Sciatic nerve (tissue), 2 donors: ENCODE measurements at regions of chr1 and their contacts with region 1.

Region 1: GRCh38 chr1:156689035-156689952 is 12.1 kb upstream of the NES start:
- DNase-seq: peak; percentile 89
- ATAC-seq: peak; percentile 95

Region 2: DNA sequence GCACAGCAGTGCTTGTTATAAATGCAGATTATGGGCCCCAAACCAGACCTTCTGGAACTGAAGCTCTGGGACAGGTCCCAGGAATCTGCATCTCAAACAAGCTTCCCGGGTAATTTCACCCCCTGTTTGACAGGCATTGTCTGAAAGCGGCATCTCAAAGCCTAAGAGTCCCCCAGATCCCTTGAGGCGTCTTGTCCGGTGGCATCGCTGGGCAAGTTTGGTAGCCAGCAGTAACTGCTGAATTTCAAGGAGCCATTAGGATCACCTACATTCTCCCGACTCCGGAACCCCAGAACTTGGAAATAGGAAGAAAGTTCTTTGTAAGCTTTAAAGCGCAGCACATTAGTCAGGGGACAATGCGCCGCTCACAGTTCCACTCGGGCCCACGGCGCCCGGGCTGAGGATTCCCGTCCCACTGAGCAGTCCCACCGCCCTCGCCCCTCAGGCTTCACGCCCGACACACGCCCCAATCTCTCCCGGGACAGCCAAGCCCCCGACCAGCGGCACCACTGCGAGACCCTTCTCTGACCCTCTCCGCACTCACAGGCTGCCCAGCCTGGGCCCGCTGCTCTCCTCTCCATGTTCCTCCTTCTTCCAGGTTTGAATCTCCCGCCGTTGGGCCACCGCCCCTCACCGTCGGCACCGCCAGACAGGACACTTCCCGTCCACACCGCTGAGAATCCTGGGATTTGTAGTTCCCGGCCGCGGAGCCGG is 117.2 kb before region 1 on chr1 and contains the start of gene IQGAP3:
- intact Hi-C with region 1: no loop called
- DNase-seq: peak; percentile 88
- ATAC-seq: peak; percentile 96
- total RNA-seq, gene IQGAP3: 0.76 TPM

Region 3: DNA sequence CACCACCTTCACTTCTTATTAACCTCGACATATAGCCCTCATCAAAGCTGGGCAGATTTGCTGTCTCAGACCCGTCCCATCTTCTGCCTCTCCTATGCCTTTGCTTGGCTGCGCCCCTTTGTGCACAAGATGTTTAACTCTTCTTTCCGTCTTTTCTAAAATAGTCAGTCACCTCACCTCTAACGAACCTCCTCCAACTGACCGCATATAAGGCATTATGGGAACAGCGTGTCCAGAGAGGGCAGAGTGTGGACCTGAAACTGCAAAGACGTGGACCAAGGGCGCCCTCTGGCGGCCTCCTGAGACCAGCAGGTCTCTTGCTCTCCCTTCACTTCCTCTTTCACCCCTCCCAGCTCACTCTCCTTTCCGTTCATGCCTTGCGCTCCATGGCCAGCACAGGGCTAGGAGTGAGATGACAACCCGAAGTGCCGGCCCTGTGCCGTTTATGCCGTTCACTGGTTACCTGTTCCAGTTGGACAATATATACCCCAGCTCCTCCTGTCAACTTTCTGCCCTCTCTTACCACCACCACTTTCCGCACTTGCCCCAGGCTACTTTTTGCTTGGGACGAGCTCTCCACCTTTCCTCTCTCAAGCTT is 36.5 kb after region 1 on chr1:
- intact Hi-C with region 1: loop called (anchors 1 kb)
- DNase-seq: peak; percentile 93
- ATAC-seq: peak; percentile 79

Region 4: GRCh38 chr1:156860113-156860627 is 170.9 kb after region 1 on chr1:
- intact Hi-C with region 1: loop called (anchors 10 kb)
- DNase-seq: peak; percentile 75
- ATAC-seq: peak; percentile 84